Right cardiac atrium (tissue), 5 donors: ENCODE measurements at regions of chr17 and their contacts with region 1.

Region 1: GRCh38 chr17:50626037-50626574 is 8.6 kb upstream of the ABCC3 start:
- DNase-seq: peak; percentile 80 to 91 (median 90)
- ATAC-seq: peak; percentile 71 to 81
- H3K4me3 ChIP-seq: no peak overlapping the region
- H3K27ac ChIP-seq: no peak overlapping the region
- H3K4me1 ChIP-seq: no peaks in the 10 kb centered on the region
- H3K27me3 ChIP-seq: no peaks in the 10 kb centered on the region

Region 2: GRCh38 chr17:50681263-50682210 is 55.4 kb after region 1 on chr17:
- intact Hi-C with region 1: loop called in 1 of 4 experiments (anchors 5 kb)
- DNase-seq: peak in 1 of 3 donors; percentile 79
- ATAC-seq: peak; percentile 66 to 67
- H3K4me3 ChIP-seq: no peak overlapping the region
- H3K27ac ChIP-seq: no peak overlapping the region
- H3K4me1 ChIP-seq: peaks cover under 1% of the 10 kb centered on the region
- H3K27me3 ChIP-seq: no peaks in the 10 kb centered on the region

Region 3: GRCh38 chr17:50719144-50719923 is 93.2 kb after region 1 on chr17 and contains the start of gene LUC7L3:
- intact Hi-C with region 1: no loop called
- DNase-seq: peak; percentile 94 to 98 (median 97)
- ATAC-seq: peak; percentile 98 to 99
- H3K4me3 ChIP-seq: peak within 1 kb of the TSS; percentile 86
- H3K27ac ChIP-seq: peak within 1 kb of the TSS; percentile 97
- H3K4me1 ChIP-seq: peaks cover 4% of the 10 kb centered on the region
- H3K27me3 ChIP-seq: no peaks in the 10 kb centered on the region
- total RNA-seq, gene LUC7L3: 61.7 to 72.4 (median 67.4) TPM